ENCODE measurements at regions of chr1 and their contacts with region 1.

Region 1: GRCh38 chr1:89987170-89987819 is 7.6 kb upstream of the ZNF326 start:
- DNase-seq: peak; percentile 76
- ATAC-seq: peak; percentile 93
- H3K4me3 ChIP-seq: no peak overlapping the region
- H3K4me3 Mint-ChIP-seq: no peak overlapping the region
- H3K27ac ChIP-seq: no peak overlapping the region
- H3K27ac Mint-ChIP-seq: no peak overlapping the region
- H3K4me1 ChIP-seq: no peaks in the 10 kb centered on the region
- H3K4me1 Mint-ChIP-seq: no peaks in the 10 kb centered on the region
- H3K27me3 ChIP-seq: no peaks in the 10 kb centered on the region
- H3K27me3 Mint-ChIP-seq: no peaks in the 10 kb centered on the region
- CTCF ChIP-seq: peak; percentile 94

Region 2: DNA sequence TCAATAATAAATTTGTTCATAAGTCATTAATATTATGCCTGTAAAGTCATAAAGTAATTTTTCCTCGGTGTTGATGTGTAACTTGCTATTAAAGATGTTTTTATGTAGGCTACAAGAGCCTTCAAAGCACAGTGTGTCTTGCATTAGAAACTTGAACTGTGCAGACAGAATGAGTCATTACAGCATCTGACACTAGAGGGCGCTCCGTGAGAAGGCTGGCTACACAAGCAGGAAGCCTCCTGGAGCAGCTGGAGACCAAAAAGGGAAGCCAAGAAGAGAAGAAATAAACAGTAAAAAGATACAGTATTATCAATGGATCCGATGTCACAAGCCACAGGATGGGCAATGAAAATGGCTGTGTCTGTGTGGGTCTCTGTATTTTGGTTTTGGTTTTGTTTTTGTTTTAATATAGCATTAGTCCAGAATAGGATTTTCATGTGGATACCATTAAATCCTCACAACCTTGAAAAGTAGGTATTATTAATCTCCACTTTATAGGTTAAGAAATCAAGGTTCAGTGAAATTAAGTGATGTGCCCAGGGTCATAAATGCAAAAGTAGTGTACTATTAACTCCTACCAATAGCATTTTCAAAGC is 182.6 kb before region 1 on chr1:
- CTCF ChIA-PET with region 1: interaction called, 169 read pairs
- POLR2A ChIA-PET with region 1: no interaction called
- intact Hi-C with region 1: loop called (anchors 1 kb)
- DNase-seq: peak; percentile 87
- ATAC-seq: peak; percentile 93
- H3K4me3 ChIP-seq: no peak overlapping the region
- H3K4me3 Mint-ChIP-seq: no peak overlapping the region
- H3K27ac ChIP-seq: no peak overlapping the region
- H3K27ac Mint-ChIP-seq: no peak overlapping the region
- H3K4me1 ChIP-seq: peaks cover 0 to 3% of the 10 kb centered on the region in 2 donors
- H3K4me1 Mint-ChIP-seq: no peaks in the 10 kb centered on the region
- H3K27me3 ChIP-seq: peaks cover 0 to 3% (median 0%) of the 10 kb centered on the region in 4 experiments
- H3K27me3 Mint-ChIP-seq: no peaks in the 10 kb centered on the region
- CTCF ChIP-seq: peak; percentile 90

Region 3: GRCh38 chr1:89833183-89834082 is 153.9 kb before region 1 on chr1:
- CTCF ChIA-PET with region 1: interaction called, 3 read pairs
- POLR2A ChIA-PET with region 1: interaction called, 10 read pairs
- intact Hi-C with region 1: no loop called
- DNase-seq: no peak
- ATAC-seq: no peak
- H3K4me3 ChIP-seq: no peak overlapping the region
- H3K4me3 Mint-ChIP-seq: no peak overlapping the region
- H3K27ac ChIP-seq: no peak overlapping the region
- H3K27ac Mint-ChIP-seq: no peak overlapping the region
- H3K4me1 ChIP-seq: peaks cover 0 to 3% of the 10 kb centered on the region in 2 donors
- H3K4me1 Mint-ChIP-seq: peaks cover 21% of the 10 kb centered on the region
- H3K27me3 ChIP-seq: no peaks in the 10 kb centered on the region
- H3K27me3 Mint-ChIP-seq: no peaks in the 10 kb centered on the region
- CTCF ChIP-seq: no peak

Region 4: GRCh38 chr1:89974701-89975470 is 12.4 kb before region 1 on chr1:
- CTCF ChIA-PET with region 1: interaction called, 23 read pairs
- POLR2A ChIA-PET with region 1: no interaction called
- intact Hi-C with region 1: no loop called
- DNase-seq: no peak
- ATAC-seq: no peak
- H3K4me3 ChIP-seq: no peak overlapping the region
- H3K4me3 Mint-ChIP-seq: no peak overlapping the region
- H3K27ac ChIP-seq: no peak overlapping the region
- H3K27ac Mint-ChIP-seq: no peak overlapping the region
- H3K4me1 ChIP-seq: no peaks in the 10 kb centered on the region
- H3K4me1 Mint-ChIP-seq: no peaks in the 10 kb centered on the region
- H3K27me3 ChIP-seq: no peaks in the 10 kb centered on the region
- H3K27me3 Mint-ChIP-seq: peaks cover 6% of the 10 kb centered on the region
- CTCF ChIP-seq: no peak

Measured in B cell (primary cell).